Lower lobe of right lung (tissue), 2 donors: ENCODE measurements at regions of chr1 and their contacts with region 1.

Region 1: GRCh38 chr1:111481387-111482221 is 7.8 kb downstream of the C1orf162 start:
- DNase-seq: peak; percentile 88
- ATAC-seq: peak; percentile 94 to 95
- H3K4me3 ChIP-seq: no peak overlapping the region
- H3K27ac ChIP-seq: no peak overlapping the region
- H3K4me1 ChIP-seq: peaks cover 21% of the 10 kb centered on the region
- H3K27me3 ChIP-seq: no peaks in the 10 kb centered on the region
- CTCF ChIP-seq: peak; percentile 75

Region 2: GRCh38 chr1:111582644-111583618 is 101.3 kb after region 1 on chr1:
- intact Hi-C with region 1: no loop called
- DNase-seq: no peak
- ATAC-seq: no peak
- H3K4me3 ChIP-seq: no peak overlapping the region
- H3K27ac ChIP-seq: peak overlapping the region; percentile 47
- H3K4me1 ChIP-seq: peaks cover 11% of the 10 kb centered on the region
- H3K27me3 ChIP-seq: no peaks in the 10 kb centered on the region
- CTCF ChIP-seq: no peak

Region 3: DNA sequence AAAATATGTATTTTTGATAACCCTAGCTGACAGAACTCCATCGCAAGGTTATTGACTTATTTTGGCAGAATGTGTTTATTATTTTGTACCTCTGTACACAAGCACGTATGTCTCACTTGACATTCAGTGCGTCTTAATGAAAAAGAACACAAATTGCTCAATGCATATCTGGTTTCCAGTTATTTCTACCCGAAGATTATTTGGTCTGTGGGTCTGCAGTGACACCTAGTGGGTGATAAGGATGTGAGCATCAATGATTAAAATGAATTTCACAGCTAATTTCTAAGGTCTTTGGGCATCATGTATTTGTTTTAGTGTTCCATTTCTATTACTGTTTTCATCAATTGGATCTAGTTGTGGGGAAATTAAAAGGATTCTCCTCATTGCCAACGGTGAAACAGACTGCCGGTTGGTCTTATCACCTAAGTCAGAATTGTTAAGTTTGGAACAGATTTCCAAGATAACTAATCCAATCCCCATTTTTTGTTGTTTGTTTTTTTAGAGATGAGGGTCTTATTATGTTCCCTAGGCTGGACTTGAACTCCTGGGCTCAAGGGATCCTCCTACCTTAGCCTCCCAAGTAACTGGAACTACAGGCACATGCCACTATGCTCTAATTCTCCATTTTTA is 288.0 kb after region 1 on chr1:
- intact Hi-C with region 1: loop called (anchors 10 kb)
- DNase-seq: no peak
- ATAC-seq: peak; percentile 61 to 74
- H3K4me3 ChIP-seq: no peak overlapping the region
- H3K27ac ChIP-seq: no peak overlapping the region
- H3K4me1 ChIP-seq: no peaks in the 10 kb centered on the region
- H3K27me3 ChIP-seq: no peaks in the 10 kb centered on the region
- CTCF ChIP-seq: peak; percentile 79